T-cell (primary cell): ENCODE measurements at regions of chr17 and their contacts with region 1.

Region 1: DNA sequence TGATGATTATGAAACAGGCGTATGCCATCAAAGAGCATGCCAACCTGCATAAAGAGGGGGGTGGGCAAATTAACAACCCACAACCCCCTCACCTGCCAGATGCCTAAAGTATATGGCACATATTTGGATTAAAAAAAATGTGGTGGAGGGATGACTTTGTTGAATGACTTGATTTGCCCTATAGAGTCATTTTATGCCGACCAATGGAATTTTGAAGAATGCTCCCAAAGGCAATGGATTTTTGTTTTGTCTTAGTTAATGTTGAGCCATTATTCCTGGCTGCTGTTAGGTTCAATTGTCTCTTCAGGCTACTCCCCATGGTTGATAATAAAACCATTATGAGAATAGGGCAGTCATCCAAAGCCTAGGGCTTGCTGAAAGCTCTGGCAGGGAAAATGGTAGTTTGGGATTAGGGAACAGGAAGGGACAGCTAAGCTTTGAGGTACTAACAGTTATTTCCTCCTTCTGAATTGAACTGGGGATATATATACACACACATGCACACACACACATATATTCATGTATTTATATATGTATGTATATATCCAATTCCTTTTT is 5.8 kb upstream of the CHCT1 start:
- DNase-seq: no peak
- ATAC-seq: no peak
- H3K4me3 ChIP-seq: no peak overlapping the region
- H3K4me3 Mint-ChIP-seq: no peak overlapping the region
- H3K27ac ChIP-seq: no peak overlapping the region
- H3K27ac Mint-ChIP-seq: no peak overlapping the region
- H3K4me1 ChIP-seq: peaks cover 3 to 4% of the 10 kb centered on the region in 2 experiments
- H3K4me1 Mint-ChIP-seq: peaks cover 4 to 5% (median 4%) of the 10 kb centered on the region in 3 donors
- H3K27me3 ChIP-seq: no peaks in the 10 kb centered on the region
- H3K27me3 Mint-ChIP-seq: peaks cover 0 to 5% of the 10 kb centered on the region in 2 donors

Region 2: DNA sequence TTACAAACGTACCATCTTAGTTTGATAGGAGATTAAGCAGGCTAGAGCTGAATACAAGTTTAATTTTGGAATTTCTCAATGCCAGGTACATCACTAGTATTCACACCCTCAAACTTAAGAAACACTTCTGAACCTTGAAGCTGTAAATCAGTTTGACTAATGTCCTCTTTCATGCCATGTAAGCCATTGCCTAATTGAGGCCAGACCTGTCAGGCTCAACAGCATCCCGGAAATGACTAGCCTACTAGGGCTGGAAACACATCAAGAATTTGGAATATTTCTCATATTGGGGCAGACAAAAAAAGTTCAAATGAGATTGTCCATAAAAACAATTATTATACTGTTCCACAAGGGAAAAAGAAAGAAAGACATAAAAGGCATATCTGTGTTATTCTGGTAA is 26.3 kb before region 1 on chr17:
- CTCF ChIA-PET with region 1: no interaction called
- POLR2A ChIA-PET with region 1: no interaction called
- DNase-seq: no peak
- ATAC-seq: no peak
- H3K4me3 ChIP-seq: no peak overlapping the region
- H3K4me3 Mint-ChIP-seq: peak overlapping the region; percentile 91 to 95 (median 93)
- H3K27ac ChIP-seq: no peak overlapping the region
- H3K27ac Mint-ChIP-seq: no peak overlapping the region
- H3K4me1 ChIP-seq: peaks cover 19 to 23% of the 10 kb centered on the region in 2 experiments
- H3K4me1 Mint-ChIP-seq: peaks cover 53 to 58% (median 56%) of the 10 kb centered on the region in 3 donors
- H3K27me3 ChIP-seq: no peaks in the 10 kb centered on the region
- H3K27me3 Mint-ChIP-seq: no peaks in the 10 kb centered on the region

Region 3: GRCh38 chr17:60630352-60630751 is 213.9 kb after region 1 on chr17:
- CTCF ChIA-PET with region 1: interaction called in 1 of 2 experiments, 10 read pairs
- POLR2A ChIA-PET with region 1: no interaction called
- DNase-seq: no peak
- ATAC-seq: no peak
- H3K4me3 ChIP-seq: no peak overlapping the region
- H3K4me3 Mint-ChIP-seq: no peak overlapping the region
- H3K27ac ChIP-seq: no peak overlapping the region
- H3K27ac Mint-ChIP-seq: peak overlapping the region; percentile 40 to 83
- H3K4me1 ChIP-seq: peaks cover 0 to 2% of the 10 kb centered on the region in 2 experiments
- H3K4me1 Mint-ChIP-seq: peaks cover 8 to 13% (median 11%) of the 10 kb centered on the region in 3 donors
- H3K27me3 ChIP-seq: no peaks in the 10 kb centered on the region
- H3K27me3 Mint-ChIP-seq: no peaks in the 10 kb centered on the region